Adrenal gland (tissue), 19 donors: ENCODE measurements at regions of chr20 and their contacts with region 1.

Region 1: GRCh38 chr20:22684072-22684762 is 99.8 kb upstream of the FOXA2 start:
- DNase-seq: peak; percentile 62 to 88 (median 75)
- H3K4me3 ChIP-seq: no peak overlapping the region
- H3K27ac ChIP-seq: no peak overlapping the region
- H3K4me1 ChIP-seq: no peaks in the 10 kb centered on the region
- H3K27me3 ChIP-seq: no peaks in the 10 kb centered on the region
- CTCF ChIP-seq: peak; percentile 72 to 88 (median 84)
- POLR2A ChIP-seq: no peak

Region 2: GRCh38 chr20:22339091-22339881 is 344.9 kb before region 1 on chr20:
- intact Hi-C with region 1: loop called (anchors 2 to 5 kb)
- DNase-seq: peak in 6 of 7 donors; percentile 19 to 60 (median 46)
- H3K4me3 ChIP-seq: no peak overlapping the region
- H3K27ac ChIP-seq: no peak overlapping the region
- H3K4me1 ChIP-seq: no peaks in the 10 kb centered on the region
- H3K27me3 ChIP-seq: peaks cover 4% of the 10 kb centered on the region
- CTCF ChIP-seq: peak; percentile 62 to 75 (median 72)
- POLR2A ChIP-seq: no peak

Region 3: DNA sequence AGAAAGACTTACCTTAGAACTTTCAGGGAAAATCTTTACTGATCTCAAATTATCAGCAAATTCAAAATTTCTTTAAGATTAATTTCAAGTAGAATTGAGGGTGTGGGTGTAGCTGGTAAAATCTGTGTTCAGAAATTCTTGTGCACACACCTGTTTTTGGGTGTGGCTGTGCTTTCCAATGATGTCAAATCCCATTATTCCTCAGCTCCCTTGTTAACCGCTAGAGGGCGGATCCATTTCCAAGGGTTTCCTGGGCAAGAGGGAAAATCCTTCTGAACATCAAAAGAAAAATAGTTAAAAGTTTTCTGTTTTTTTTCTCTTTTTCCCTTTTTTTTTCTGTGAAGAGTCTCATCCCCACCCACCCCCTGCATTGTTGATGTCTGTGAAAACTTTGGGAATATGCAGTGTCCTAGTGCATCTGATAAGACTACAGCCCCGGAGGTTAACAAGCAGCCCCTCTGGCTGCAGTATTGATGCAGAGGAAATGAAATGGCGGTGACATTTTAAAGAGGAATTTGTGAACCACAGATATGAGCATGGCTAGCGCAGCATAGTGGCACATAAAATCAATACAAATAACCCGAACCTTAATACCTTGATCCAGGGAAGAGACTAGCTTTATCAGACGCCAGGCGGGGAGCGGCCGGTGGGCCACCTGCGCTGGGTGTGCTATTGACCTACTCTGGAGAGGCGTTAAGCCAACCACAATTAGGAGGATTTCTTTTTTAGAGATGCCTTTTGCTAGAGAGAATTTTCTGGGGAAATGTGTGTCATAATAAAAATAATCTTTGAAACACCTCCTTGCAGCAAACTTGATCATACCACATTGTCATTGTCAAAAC is 230.8 kb before region 1 on chr20:
- intact Hi-C with region 1: loop called in 1 of 2 experiments (anchors 10 kb)
- DNase-seq: peak in 1 of 7 donors; percentile 4
- H3K4me3 ChIP-seq: no peak overlapping the region
- H3K27ac ChIP-seq: no peak overlapping the region
- H3K4me1 ChIP-seq: no peaks in the 10 kb centered on the region
- H3K27me3 ChIP-seq: peaks cover 18% of the 10 kb centered on the region
- CTCF ChIP-seq: peak in 5 of 6 experiments; percentile 21 to 63 (median 41)
- POLR2A ChIP-seq: no peak

Region 4: GRCh38 chr20:22723648-22724047 is 39.4 kb after region 1 on chr20:
- intact Hi-C with region 1: no loop called
- DNase-seq: no peak
- H3K4me3 ChIP-seq: no peak overlapping the region
- H3K27ac ChIP-seq: no peak overlapping the region
- H3K4me1 ChIP-seq: no peaks in the 10 kb centered on the region
- H3K27me3 ChIP-seq: no peaks in the 10 kb centered on the region
- CTCF ChIP-seq: no peak
- POLR2A ChIP-seq: no peak

Region 5: GRCh38 chr20:23214903-23215302 is 530.7 kb after region 1 on chr20:
- intact Hi-C with region 1: no loop called
- DNase-seq: no peak
- H3K4me3 ChIP-seq: no peak overlapping the region
- H3K27ac ChIP-seq: no peak overlapping the region
- H3K4me1 ChIP-seq: no peaks in the 10 kb centered on the region
- H3K27me3 ChIP-seq: no peaks in the 10 kb centered on the region
- CTCF ChIP-seq: no peak
- POLR2A ChIP-seq: no peak